ENCODE measurements at regions of chr12 and their contacts with region 1.

Region 1: GRCh38 chr12:47071241-47071852 is 8.1 kb upstream of the PCED1B start:
- DNase-seq: no peak
- H3K4me3 ChIP-seq: no peak overlapping the region
- H3K27ac ChIP-seq: no peak overlapping the region
- H3K4me1 ChIP-seq: peaks cover 0 to 14% (median 7%) of the 10 kb centered on the region in 4 experiments; a peak in 5 of 7 replicates
- H3K27me3 ChIP-seq: no peaks in the 10 kb centered on the region
- CTCF ChIP-seq: peak in 2 of 3 experiments; percentile 54 to 73; a peak in 3 of 4 replicates
- EP300 ChIP-seq: no peak
- POLR2A ChIP-seq: no peak
- RAD21 ChIP-seq: peak; percentile 58 to 68

Region 2: GRCh38 chr12:47032644-47033043 is 38.7 kb before region 1 on chr12:
- CTCF ChIA-PET with region 1: interaction called, 36 read pairs
- POLR2A ChIA-PET with region 1: interaction called, 3 read pairs
- DNase-seq: no peak
- H3K4me3 ChIP-seq: no peak overlapping the region
- H3K27ac ChIP-seq: no peak overlapping the region
- H3K4me1 ChIP-seq: peaks cover 0 to 8% (median 4%) of the 10 kb centered on the region in 4 experiments; a peak in 4 of 7 replicates
- H3K27me3 ChIP-seq: peaks cover 0 to 1% (median 0%) of the 10 kb centered on the region in 4 experiments; a peak in 2 of 7 replicates
- CTCF ChIP-seq: peak in 2 of 3 experiments; percentile 41 to 42; a peak in 2 of 4 replicates
- EP300 ChIP-seq: no peak
- POLR2A ChIP-seq: no peak
- RAD21 ChIP-seq: peak; percentile 79 to 81

Region 3: DNA sequence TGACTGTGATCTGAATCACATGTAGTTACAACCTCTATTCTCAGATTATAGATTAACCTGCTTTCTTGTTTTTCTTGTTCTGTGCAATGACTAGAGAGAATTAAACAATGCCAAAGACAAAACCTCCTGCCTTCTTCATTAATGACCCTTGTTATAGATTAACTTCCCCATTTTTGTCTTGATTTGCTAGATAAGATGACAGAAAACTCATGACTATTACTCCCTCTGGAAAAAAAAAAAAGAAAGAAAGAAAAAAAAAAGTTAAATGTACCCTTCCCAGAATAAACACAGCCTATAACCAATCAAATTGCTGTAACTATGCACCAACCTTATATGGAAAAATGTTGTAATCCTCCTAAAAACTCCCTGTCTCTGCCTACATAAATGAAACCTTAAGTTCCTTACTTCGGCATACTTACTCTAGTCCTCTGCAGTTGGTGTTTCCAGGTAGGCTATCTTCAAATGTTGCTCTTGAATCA is 33.0 kb before region 1 on chr12:
- CTCF ChIA-PET with region 1: interaction called, 36 read pairs
- POLR2A ChIA-PET with region 1: interaction called, 3 read pairs
- DNase-seq: no peak
- H3K4me3 ChIP-seq: no peak overlapping the region
- H3K27ac ChIP-seq: no peak overlapping the region
- H3K4me1 ChIP-seq: peaks cover 0 to 4% (median 3%) of the 10 kb centered on the region in 4 experiments; a peak in 3 of 7 replicates
- H3K27me3 ChIP-seq: no peaks in the 10 kb centered on the region
- CTCF ChIP-seq: no peak
- EP300 ChIP-seq: no peak
- POLR2A ChIP-seq: no peak
- RAD21 ChIP-seq: no peak

Region 4: DNA sequence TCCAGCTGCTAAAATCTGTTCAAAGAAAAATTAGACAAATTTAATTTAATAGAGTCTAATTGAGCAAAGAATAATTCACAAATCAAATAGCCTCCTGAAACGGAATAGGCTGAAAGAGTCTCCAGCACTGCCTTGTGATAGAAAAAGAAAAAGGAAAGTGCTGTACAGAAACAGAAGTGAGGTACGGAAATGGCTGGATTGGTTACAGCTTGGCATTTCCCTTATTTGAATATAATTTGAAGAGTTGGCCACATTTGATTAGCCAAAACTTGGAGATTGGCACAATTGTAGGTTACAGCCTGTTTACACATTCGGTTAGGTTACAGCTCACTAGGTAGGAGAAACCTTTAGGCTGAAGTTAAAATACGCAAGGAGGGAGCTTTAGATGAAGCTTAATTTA is 16.7 kb before region 1 on chr12:
- CTCF ChIA-PET with region 1: interaction called, 12 read pairs
- POLR2A ChIA-PET with region 1: no interaction called
- DNase-seq: no peak
- H3K4me3 ChIP-seq: no peak overlapping the region
- H3K27ac ChIP-seq: no peak overlapping the region
- H3K4me1 ChIP-seq: no peaks in the 10 kb centered on the region
- H3K27me3 ChIP-seq: no peaks in the 10 kb centered on the region
- CTCF ChIP-seq: no peak
- EP300 ChIP-seq: no peak
- POLR2A ChIP-seq: no peak
- RAD21 ChIP-seq: no peak

Region 5: GRCh38 chr12:47085815-47086252 is 14.5 kb after region 1 on chr12:
- CTCF ChIA-PET with region 1: interaction called, 41 read pairs
- POLR2A ChIA-PET with region 1: interaction called, 3 read pairs
- DNase-seq: no peak
- H3K4me3 ChIP-seq: no peak overlapping the region
- H3K27ac ChIP-seq: no peak overlapping the region
- H3K4me1 ChIP-seq: peaks cover 0 to 12% (median 3%) of the 10 kb centered on the region in 4 experiments; a peak in 3 of 7 replicates
- H3K27me3 ChIP-seq: peaks cover 0 to under 1% (median 0%) of the 10 kb centered on the region in 4 experiments; a peak in 1 of 7 replicates
- CTCF ChIP-seq: no peak
- EP300 ChIP-seq: no peak
- POLR2A ChIP-seq: no peak
- RAD21 ChIP-seq: no peak

Region 6: DNA sequence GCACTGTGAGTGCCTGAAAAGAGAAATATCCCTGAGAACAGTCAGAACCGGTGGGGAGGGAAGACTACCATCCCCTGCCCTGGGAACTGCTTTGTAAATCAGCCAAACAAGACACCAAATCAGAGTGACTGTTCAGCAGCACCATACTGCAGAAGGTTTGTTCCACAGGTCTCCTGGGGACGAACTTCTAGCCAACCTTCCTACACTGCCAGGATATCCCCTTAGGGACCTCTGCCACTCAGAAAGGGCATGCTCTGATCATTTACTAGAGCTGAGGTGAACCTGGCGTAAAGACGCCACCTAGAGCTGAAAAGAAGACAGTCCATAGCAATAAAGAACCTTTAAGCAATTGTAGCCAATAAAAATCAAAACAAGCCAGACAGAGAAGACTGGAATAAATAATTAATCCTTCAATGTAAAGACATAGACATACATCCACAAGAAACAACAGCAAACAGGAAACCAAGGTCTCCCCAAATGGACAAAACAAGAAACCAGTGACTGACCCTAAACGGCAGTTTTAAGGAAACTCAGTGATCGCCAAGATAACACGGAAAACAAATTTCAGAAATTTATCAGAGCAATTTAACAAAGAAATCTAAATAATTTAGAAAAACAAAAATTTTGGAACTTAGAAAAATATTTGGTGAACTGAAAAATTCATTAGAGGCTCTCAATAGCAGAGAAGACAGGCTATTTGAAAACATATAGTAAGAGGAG is 236.5 kb after region 1 on chr12:
- CTCF ChIA-PET with region 1: interaction called, 12 read pairs
- POLR2A ChIA-PET with region 1: interaction called, 3 read pairs
- DNase-seq: peak in 1 of 2 experiments; percentile 5
- H3K4me3 ChIP-seq: no peak overlapping the region
- H3K27ac ChIP-seq: no peak overlapping the region
- H3K4me1 ChIP-seq: peaks cover 0 to 4% (median 0%) of the 10 kb centered on the region in 4 experiments; a peak in 1 of 7 replicates
- H3K27me3 ChIP-seq: no peaks in the 10 kb centered on the region
- CTCF ChIP-seq: peak in 2 of 3 experiments; percentile 61 to 72; a peak in 3 of 4 replicates
- EP300 ChIP-seq: no peak
- POLR2A ChIP-seq: no peak
- RAD21 ChIP-seq: peak; percentile 88 to 89

Region 7: GRCh38 chr12:47397664-47398281 is 326.4 kb after region 1 on chr12:
- CTCF ChIA-PET with region 1: interaction called, 11 read pairs
- POLR2A ChIA-PET with region 1: no interaction called
- DNase-seq: no peak
- H3K4me3 ChIP-seq: no peak overlapping the region
- H3K27ac ChIP-seq: no peak overlapping the region
- H3K4me1 ChIP-seq: no peaks in the 10 kb centered on the region
- H3K27me3 ChIP-seq: no peaks in the 10 kb centered on the region
- CTCF ChIP-seq: peak in 2 of 3 experiments; percentile 32 to 45; a peak in 3 of 4 replicates
- EP300 ChIP-seq: no peak
- POLR2A ChIP-seq: no peak
- RAD21 ChIP-seq: peak; percentile 71 to 76

Measured in H1 (cell line).